H1 (cell line): ENCODE measurements at regions of chr1 and their contacts with region 1.

Region 1: GRCh38 chr1:151693076-151693651 is 23.4 kb downstream of the CELF3 start:
- DNase-seq: no peak
- H3K4me3 ChIP-seq: no peak overlapping the region
- H3K27ac ChIP-seq: no peak overlapping the region
- H3K4me1 ChIP-seq: no peaks in the 10 kb centered on the region
- H3K27me3 ChIP-seq: no peaks in the 10 kb centered on the region
- CTCF ChIP-seq: peak in 2 of 3 experiments; percentile 82 to 88; a peak in 3 of 4 replicates
- EP300 ChIP-seq: no peak
- POLR2A ChIP-seq: no peak
- RAD21 ChIP-seq: peak; percentile 85 to 93

Region 2: DNA sequence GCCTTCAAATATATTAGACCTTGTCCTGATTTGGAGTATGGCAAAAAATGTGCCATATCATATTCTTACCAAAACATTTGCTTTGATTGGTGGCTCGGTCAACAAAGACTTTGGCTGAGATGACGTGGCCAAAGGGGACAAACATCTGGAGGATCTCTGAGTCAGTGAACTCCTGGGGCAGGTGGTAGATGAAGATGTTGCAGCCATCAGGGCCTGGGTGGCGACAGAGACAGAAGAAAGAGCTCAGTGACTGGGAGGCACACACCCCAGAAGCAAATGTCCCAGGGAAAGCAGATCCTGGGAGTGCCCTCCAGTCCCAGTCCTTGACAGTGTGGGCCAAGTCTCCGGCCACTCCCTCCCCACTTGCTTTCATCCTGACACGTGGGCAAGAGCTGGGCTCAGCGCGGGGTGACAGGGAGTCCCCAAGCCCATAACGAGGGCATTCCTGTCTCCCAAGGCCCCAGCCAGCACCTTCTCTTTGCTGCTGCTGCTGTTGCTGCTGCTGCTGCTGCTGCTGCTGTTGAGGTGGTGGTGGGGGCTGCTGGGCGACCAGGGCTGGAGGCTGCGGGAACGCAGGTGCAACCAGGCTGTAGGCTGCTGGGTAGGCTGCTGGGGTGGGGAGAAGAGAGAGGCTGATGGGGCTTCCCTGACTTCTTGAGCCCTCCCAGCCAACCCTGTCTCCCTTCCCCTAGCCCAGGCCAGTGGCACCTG is 12.7 kb after region 1 on chr1:
- CTCF ChIA-PET with region 1: interaction called, 12 read pairs
- POLR2A ChIA-PET with region 1: no interaction called
- DNase-seq: no peak
- H3K4me3 ChIP-seq: no peak overlapping the region
- H3K27ac ChIP-seq: no peak overlapping the region
- H3K4me1 ChIP-seq: peaks cover 0 to 4% (median 2%) of the 10 kb centered on the region in 4 experiments; a peak in 3 of 7 replicates
- H3K27me3 ChIP-seq: no peaks in the 10 kb centered on the region; a peak in 1 of 7 replicates
- CTCF ChIP-seq: no peak
- EP300 ChIP-seq: no peak
- POLR2A ChIP-seq: no peak
- RAD21 ChIP-seq: 0 out of 4 replicates have a peak, but pooled peaks of 1 of the 2 experiments have one; percentile 7

Region 3: GRCh38 chr1:151720974-151721787 is 28.0 kb after region 1 on chr1 and contains the start of gene RIIAD1:
- CTCF ChIA-PET with region 1: interaction called, 10 read pairs
- POLR2A ChIA-PET with region 1: interaction called, 4 read pairs
- DNase-seq: no peak
- H3K4me3 ChIP-seq: peak within 1 kb of the TSS; percentile 55 to 85 (median 60)
- H3K27ac ChIP-seq: no peak within 1 kb of the TSS
- H3K4me1 ChIP-seq: peaks cover 2 to 11% (median 4%) of the 10 kb centered on the region in 4 experiments
- H3K27me3 ChIP-seq: peaks cover 6 to 34% (median 28%) of the 10 kb centered on the region in 4 experiments
- CTCF ChIP-seq: no peak
- EP300 ChIP-seq: no peak
- POLR2A ChIP-seq: no peak
- RAD21 ChIP-seq: no peak
- total RNA-seq, gene RIIAD1: not detected in 2 replicates

Region 4: DNA sequence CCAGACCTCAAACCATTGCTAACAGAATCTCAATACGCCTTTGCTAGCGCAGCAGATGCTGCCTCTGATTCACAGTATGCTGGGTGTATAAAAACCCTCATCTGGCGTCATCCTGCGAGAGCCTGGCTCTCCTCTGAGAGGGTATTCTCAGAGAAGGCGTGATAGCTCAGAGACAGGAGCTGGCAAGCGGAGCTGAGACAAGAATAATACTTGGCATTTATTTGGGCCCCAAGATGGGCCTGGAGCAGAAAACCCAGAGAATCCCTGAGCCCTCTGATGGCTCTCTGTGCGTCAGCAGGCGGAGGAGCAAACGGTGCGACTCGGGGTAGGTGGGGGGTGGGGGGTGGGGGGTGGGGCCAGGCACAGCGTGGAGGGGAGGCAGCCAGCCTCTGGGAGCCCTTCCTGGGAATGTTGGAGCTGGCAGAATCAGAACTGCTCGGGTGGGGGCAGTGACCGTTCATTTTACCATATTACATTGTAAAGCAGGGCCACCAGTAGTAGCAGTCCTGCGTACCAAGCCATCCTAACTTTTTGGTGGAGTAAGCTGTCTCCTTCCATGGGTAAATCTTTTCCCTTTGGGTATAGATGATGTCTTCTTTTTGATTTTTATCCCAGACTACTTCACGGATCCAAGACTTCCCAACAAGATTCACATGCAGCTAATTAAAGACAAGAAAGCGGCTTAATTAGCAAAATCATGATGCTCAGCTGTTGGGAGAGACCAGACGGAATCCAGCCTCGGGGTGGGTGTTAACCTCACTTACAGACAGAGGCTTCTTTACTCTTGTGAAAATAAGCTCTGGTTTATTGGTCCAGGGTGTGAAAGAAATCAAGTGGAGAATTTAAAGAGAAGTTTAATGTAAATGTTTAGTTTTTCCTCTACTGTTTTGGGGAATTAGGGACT is 35.2 kb after region 1 on chr1:
- CTCF ChIA-PET with region 1: interaction called, 90 read pairs
- POLR2A ChIA-PET with region 1: no interaction called
- DNase-seq: peak in 1 of 2 experiments; percentile 53
- H3K4me3 ChIP-seq: peak overlapping the region in 1 of 4 experiments; percentile 39; a peak in 2 of 8 replicates
- H3K27ac ChIP-seq: no peak overlapping the region
- H3K4me1 ChIP-seq: peaks cover 3 to 11% (median 7%) of the 10 kb centered on the region in 4 experiments
- H3K27me3 ChIP-seq: no peaks in the 10 kb centered on the region; a peak in 2 of 7 replicates
- CTCF ChIP-seq: no peak
- EP300 ChIP-seq: no peak
- POLR2A ChIP-seq: no peak
- RAD21 ChIP-seq: no peak; a peak in 1 of 4 replicates

Region 5: DNA sequence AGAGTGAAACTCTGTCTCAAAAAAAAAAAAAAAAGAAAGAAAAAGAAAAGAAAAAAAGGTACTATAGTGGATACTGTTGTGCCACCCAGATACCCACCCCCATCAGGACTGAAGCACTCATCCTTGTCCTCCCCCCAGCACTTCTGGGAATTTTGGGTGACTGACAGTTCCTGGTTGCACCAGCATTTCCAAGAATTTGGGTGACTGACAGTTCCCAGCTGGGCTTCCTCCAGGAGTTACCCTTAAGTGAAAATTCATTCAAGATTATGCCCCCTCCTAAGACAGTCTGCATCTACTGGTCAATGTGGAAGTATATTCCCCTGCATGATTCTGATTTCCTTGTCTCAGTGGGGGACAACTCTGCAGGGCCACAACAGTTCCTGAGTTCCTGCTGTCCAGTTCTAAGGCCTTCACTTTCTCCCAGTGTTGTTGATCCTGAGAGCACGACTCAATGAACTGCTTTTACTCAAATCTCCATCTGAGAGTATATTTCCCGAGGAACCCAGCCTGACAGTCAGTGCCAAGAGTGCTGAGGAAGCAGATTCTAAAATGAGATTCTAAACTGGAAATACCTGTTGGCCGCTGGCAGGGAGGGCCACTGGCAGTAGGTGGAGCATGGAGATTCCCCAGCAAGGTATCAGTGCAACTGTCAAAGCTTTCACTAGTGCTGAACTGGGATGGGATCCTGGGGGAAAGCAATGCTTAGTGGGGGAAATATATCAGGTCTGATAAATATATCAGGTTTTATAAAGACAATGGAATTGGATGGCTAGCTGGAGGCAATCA is 46.6 kb after region 1 on chr1:
- CTCF ChIA-PET with region 1: interaction called, 90 read pairs
- POLR2A ChIA-PET with region 1: no interaction called
- DNase-seq: no peak
- H3K4me3 ChIP-seq: no peak overlapping the region
- H3K27ac ChIP-seq: no peak overlapping the region
- H3K4me1 ChIP-seq: peaks cover 0 to 5% (median 3%) of the 10 kb centered on the region in 4 experiments; a peak in 3 of 7 replicates
- H3K27me3 ChIP-seq: no peaks in the 10 kb centered on the region; a peak in 1 of 7 replicates
- CTCF ChIP-seq: no peak
- EP300 ChIP-seq: no peak
- POLR2A ChIP-seq: no peak
- RAD21 ChIP-seq: peak in 1 of 2 experiments; percentile 6; a peak in 1 of 4 replicates